GM12878 (cell line): ENCODE measurements at regions of chr10 and their contacts with region 1.

Region 1: GRCh38 chr10:90047243-90047729 is 345.9 kb downstream of the KIF20B start:
- DNase-seq: peak; percentile 90
- ATAC-seq: peak; percentile 77
- H3K4me3 ChIP-seq: no peak overlapping the region
- H3K27ac ChIP-seq: peak overlapping the region; percentile 84
- H3K4me1 ChIP-seq: peaks cover 22% of the 10 kb centered on the region
- H3K27me3 ChIP-seq: no peaks in the 10 kb centered on the region
- CTCF ChIP-seq: no peak
- EP300 ChIP-seq: peak; percentile 93
- POLR2A ChIP-seq: no peak
- RAD21 ChIP-seq: no peak

Region 2: DNA sequence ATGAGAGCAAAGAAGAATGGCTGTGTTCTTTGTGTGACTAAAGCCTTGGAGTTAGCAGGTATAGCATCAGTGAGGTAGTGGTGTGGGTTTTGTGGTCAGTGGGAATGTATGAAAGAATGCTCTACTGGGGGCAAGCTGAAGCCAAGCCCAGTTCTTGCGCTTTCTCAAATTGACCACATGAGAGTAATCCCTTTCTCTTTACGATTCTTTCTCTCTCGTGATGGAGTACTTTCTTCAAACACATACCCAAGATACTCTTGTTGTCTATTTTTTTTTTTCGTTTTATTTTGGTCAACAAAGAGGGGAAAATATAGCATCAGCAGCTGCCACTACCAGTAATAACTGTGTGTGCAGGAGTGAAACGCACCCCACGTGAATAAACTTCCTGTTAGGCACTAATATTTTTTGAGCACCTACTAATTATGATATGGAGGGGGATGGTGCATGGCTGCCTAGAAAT is 393.8 kb before region 1 on chr10:
- CTCF ChIA-PET with region 1: no interaction called
- POLR2A ChIA-PET with region 1: no interaction called
- RAD21 ChIA-PET with region 1: interaction called, 3 read pairs
- SMC1A ChIA-PET with region 1: no interaction called
- in situ Hi-C with region 1: no loop called
- intact Hi-C with region 1: loop called (anchors 10 kb)
- DNase-seq: peak; percentile 65
- ATAC-seq: peak; percentile 87
- H3K4me3 ChIP-seq: no peak overlapping the region
- H3K27ac ChIP-seq: peak overlapping the region; percentile 30
- H3K4me1 ChIP-seq: peaks cover 23% of the 10 kb centered on the region
- H3K27me3 ChIP-seq: no peaks in the 10 kb centered on the region
- CTCF ChIP-seq: no peak
- EP300 ChIP-seq: peak; percentile 83 to 84
- POLR2A ChIP-seq: no peak
- RAD21 ChIP-seq: no peak

Region 3: GRCh38 chr10:90087197-90088007 is 40.1 kb after region 1 on chr10:
- CTCF ChIA-PET with region 1: interaction called, 12 read pairs
- POLR2A ChIA-PET with region 1: no interaction called
- RAD21 ChIA-PET with region 1: interaction called, 13 read pairs
- SMC1A ChIA-PET with region 1: interaction called, 4 read pairs
- in situ Hi-C with region 1: no loop called
- intact Hi-C with region 1: loop called (anchors 1 kb)
- DNase-seq: peak; percentile 69
- ATAC-seq: peak; percentile 100
- H3K4me3 ChIP-seq: no peak overlapping the region
- H3K27ac ChIP-seq: peak overlapping the region; percentile 73
- H3K4me1 ChIP-seq: peaks cover 9% of the 10 kb centered on the region
- H3K27me3 ChIP-seq: no peaks in the 10 kb centered on the region
- CTCF ChIP-seq: peak in 1 of 3 experiments; percentile 22; a peak in 1 of 6 replicates
- EP300 ChIP-seq: peak; percentile 82 to 83; a peak in 3 of 4 replicates
- POLR2A ChIP-seq: no peak
- RAD21 ChIP-seq: peak; percentile 54

Region 4: GRCh38 chr10:90130321-90131086 is 83.2 kb after region 1 on chr10:
- CTCF ChIA-PET with region 1: no interaction called
- POLR2A ChIA-PET with region 1: no interaction called
- RAD21 ChIA-PET with region 1: no interaction called
- SMC1A ChIA-PET with region 1: interaction called, 6 read pairs
- in situ Hi-C with region 1: no loop called
- intact Hi-C with region 1: loop called (anchors 2 kb)
- DNase-seq: peak; percentile 41
- ATAC-seq: peak; percentile 84
- H3K4me3 ChIP-seq: no peak overlapping the region
- H3K27ac ChIP-seq: peak overlapping the region; percentile 51
- H3K4me1 ChIP-seq: peaks cover 12% of the 10 kb centered on the region; the same call in 1 of the 2 replicates
- H3K27me3 ChIP-seq: no peaks in the 10 kb centered on the region
- CTCF ChIP-seq: no peak
- EP300 ChIP-seq: peak; percentile 20 to 37; a peak in 1 of 4 replicates
- POLR2A ChIP-seq: no peak
- RAD21 ChIP-seq: no peak

Region 5: GRCh38 chr10:90162271-90162853 is 115.1 kb after region 1 on chr10:
- CTCF ChIA-PET with region 1: no interaction called
- POLR2A ChIA-PET with region 1: no interaction called
- RAD21 ChIA-PET with region 1: no interaction called
- SMC1A ChIA-PET with region 1: no interaction called
- in situ Hi-C with region 1: no loop called
- intact Hi-C with region 1: no loop called
- DNase-seq: no peak
- ATAC-seq: no peak
- H3K4me3 ChIP-seq: no peak overlapping the region
- H3K27ac ChIP-seq: no peak overlapping the region
- H3K4me1 ChIP-seq: no peaks in the 10 kb centered on the region
- H3K27me3 ChIP-seq: no peaks in the 10 kb centered on the region
- CTCF ChIP-seq: no peak
- EP300 ChIP-seq: no peak
- POLR2A ChIP-seq: no peak
- RAD21 ChIP-seq: no peak

Region 6: GRCh38 chr10:90222371-90222770 is 175.1 kb after region 1 on chr10:
- CTCF ChIA-PET with region 1: no interaction called
- POLR2A ChIA-PET with region 1: no interaction called
- RAD21 ChIA-PET with region 1: no interaction called
- SMC1A ChIA-PET with region 1: no interaction called
- in situ Hi-C with region 1: no loop called
- intact Hi-C with region 1: no loop called
- DNase-seq: no peak
- ATAC-seq: no peak
- H3K4me3 ChIP-seq: no peak overlapping the region
- H3K27ac ChIP-seq: no peak overlapping the region
- H3K4me1 ChIP-seq: no peaks in the 10 kb centered on the region
- H3K27me3 ChIP-seq: no peaks in the 10 kb centered on the region
- CTCF ChIP-seq: no peak
- EP300 ChIP-seq: no peak
- POLR2A ChIP-seq: no peak
- RAD21 ChIP-seq: no peak